Activated CD4-positive, alpha-beta T cell treated with anti-CD3 and anti-CD28 coated beads, Interleukin-2, amount 10 ng/mL, durations not matched to agents 24 days and 14 days (primary cell): ENCODE measurements at regions of chr12 and their contacts with region 1.

Region 1: DNA sequence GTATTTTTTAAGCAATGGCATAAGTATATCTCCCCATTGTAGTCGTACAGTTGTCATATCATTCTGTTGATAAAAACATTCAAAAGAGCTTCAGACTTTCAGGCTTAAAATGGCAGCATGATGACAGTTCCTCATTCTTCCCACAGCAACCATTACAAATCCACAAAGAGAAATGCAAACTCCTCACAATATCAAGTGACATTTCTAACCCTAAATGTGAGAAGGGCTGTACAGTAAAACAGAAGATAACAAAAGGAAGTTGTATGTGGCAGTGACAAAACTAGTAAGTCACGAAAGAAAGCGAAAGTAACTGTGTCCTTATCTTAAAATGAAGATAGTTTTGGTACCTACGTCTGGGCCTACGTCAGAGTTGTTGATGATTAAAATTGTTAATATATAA is 46.7 kb downstream of the GXYLT1 start:
- DNase-seq: peak; percentile 71
- H3K4me3 Mint-ChIP-seq: peak overlapping the region; percentile 88
- H3K27ac Mint-ChIP-seq: peak overlapping the region; percentile 86
- H3K4me1 Mint-ChIP-seq: peaks cover 33% of the 10 kb centered on the region
- H3K27me3 Mint-ChIP-seq: no peaks in the 10 kb centered on the region

Region 2: GRCh38 chr12:42056130-42056529 is 41.8 kb before region 1 on chr12:
- intact Hi-C with region 1: no loop called
- DNase-seq: no peak
- H3K4me3 Mint-ChIP-seq: no peak overlapping the region
- H3K27ac Mint-ChIP-seq: no peak overlapping the region
- H3K4me1 Mint-ChIP-seq: no peaks in the 10 kb centered on the region
- H3K27me3 Mint-ChIP-seq: peaks cover 15% of the 10 kb centered on the region

Region 3: GRCh38 chr12:42237052-42237852 is 139.3 kb after region 1 on chr12:
- intact Hi-C with region 1: loop called (anchors 5 kb)
- DNase-seq: peak; percentile 91
- H3K4me3 Mint-ChIP-seq: peak overlapping the region; percentile 96
- H3K27ac Mint-ChIP-seq: peak overlapping the region; percentile 89
- H3K4me1 Mint-ChIP-seq: peaks cover 42% of the 10 kb centered on the region
- H3K27me3 Mint-ChIP-seq: no peaks in the 10 kb centered on the region

Region 4: DNA sequence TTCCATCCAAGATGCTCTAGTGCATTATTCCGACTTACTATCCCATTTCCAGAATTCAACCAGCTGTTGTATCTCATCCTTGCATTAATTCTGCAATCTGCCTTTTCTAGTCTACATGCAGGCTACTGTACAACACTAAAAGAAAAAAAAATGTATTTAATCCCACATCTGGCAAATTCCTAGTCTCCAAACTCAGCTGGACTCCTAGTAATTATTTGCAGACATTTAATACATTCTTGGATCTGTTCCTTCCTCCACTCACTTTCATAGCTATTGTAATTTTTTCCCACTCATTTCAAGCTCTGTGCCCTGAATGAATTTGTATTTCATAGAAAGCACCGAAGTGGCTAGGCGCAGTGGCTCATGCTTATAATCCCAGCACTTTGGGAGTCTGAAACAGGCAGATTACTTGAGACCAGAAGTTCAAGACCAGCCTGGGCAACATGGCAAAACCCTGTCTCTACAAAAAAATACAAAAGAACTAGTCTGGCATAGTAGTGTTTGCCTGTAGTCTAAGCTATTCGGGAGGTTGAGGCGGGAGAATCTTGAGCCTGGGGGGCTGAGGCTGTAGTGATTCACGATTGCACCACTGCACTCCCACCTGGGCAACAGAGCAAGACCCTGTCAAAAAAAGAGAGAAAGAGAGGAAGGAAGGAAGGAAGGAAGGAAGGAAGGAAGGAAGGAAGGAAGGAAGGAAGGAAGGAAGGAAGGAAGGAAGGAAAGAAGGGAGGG is 179.6 kb after region 1 on chr12:
- intact Hi-C with region 1: no loop called
- DNase-seq: no peak
- H3K4me3 Mint-ChIP-seq: no peak overlapping the region
- H3K27ac Mint-ChIP-seq: no peak overlapping the region
- H3K4me1 Mint-ChIP-seq: no peaks in the 10 kb centered on the region
- H3K27me3 Mint-ChIP-seq: peaks cover 4% of the 10 kb centered on the region